PC-3 (cell line): ENCODE measurements at regions of chr1 and their contacts with region 1.

Region 1: DNA sequence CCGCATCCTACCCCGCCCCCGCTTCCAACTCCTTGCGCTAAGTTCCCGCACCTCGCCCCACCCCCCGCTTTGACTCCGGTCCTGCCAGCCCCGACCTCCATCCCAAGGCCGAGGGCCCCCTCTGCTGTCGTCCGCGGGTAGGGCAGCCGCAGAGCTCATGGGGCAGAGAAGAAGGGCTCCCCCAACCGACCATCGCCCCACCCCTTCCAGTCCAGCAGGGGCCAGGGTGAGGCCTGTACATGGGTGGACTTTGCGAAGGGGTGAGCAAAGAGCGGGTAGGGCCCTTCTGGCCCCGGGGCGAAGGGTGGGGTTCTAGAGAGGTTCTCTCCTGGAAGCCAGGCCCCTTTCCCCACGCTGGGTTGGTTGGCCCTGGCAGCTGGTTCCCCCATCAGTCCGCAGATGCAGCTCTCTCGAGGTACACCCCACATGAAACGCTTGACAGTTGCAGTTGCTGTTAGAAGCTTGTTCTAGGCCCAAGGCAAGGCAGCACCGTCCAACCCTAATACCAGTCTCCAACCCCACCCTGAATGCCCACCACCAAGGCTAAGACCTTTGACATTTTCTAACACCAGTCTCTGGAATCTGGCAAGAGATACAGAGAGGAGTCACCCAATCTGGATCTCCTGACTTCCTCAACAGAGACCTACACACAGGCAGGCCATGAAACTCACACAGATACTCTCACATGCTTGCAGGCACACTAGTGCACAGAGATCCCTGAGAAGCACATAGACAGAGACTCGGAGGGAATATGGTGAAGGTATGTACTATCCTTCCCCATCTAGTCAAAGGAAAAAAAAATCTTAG is 25.3 kb upstream of the ADGRB2 start:
- DNase-seq: peak; percentile 91
- ATAC-seq: peak; percentile 81
- H3K4me3 ChIP-seq: peak overlapping the region; percentile 76
- H3K27ac ChIP-seq: no peak overlapping the region
- H3K4me1 ChIP-seq: no peaks in the 10 kb centered on the region
- H3K27me3 ChIP-seq: no peaks in the 10 kb centered on the region
- CTCF ChIP-seq: peak; percentile 89

Region 2: DNA sequence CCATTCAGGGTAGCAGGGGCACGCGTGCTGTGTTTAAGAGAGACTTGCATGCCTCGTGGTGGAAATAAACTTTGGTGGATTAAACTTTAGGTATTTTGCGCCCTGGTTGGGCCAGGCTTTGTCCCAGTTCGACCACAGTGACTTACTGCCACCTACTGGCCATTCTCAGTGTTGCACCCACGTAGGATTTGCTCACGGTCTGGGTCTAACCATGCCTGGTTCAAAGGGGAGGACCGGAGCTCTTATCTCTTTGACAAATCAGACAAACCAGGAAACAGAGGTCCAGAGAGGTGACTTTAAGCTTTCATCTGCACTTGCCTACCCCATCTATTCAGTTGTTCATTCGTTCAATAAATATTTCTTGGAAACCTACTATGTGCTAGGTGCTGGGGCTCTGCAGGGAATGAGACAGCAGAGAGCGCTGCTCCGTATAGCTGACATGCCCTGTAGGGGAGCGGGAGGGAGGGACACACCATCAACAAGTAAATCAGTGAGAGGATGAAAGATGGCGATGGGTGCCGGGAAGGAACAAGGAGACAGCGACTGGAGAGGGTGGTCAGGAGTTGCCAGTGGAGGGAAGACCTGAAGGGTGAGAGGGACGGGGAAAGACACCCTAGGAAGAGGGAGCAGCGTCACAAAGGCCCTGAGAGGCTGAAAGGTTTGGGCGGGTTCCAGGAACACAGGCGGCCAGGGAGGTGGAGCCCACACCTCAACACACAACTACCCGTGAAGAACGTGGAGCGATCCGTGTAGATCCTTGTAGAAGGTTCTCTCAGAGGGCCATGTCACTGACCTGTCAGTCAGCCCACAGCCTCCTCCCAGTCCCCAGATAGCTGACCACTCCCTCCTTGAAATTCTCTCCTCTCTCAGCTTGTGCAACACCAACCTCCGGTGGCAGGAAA is 240.3 kb before region 1 on chr1:
- CTCF ChIA-PET with region 1: interaction called, 4 read pairs
- POLR2A ChIA-PET with region 1: interaction called, 12 read pairs
- intact Hi-C with region 1: no loop called
- DNase-seq: peak; percentile 97
- ATAC-seq: peak; percentile 86
- H3K4me3 ChIP-seq: peak overlapping the region; percentile 55
- H3K27ac ChIP-seq: peak overlapping the region; percentile 74
- H3K4me1 ChIP-seq: peaks cover 24% of the 10 kb centered on the region
- H3K27me3 ChIP-seq: no peaks in the 10 kb centered on the region
- CTCF ChIP-seq: peak; percentile 96

Region 3: GRCh38 chr1:31644560-31645273 is 144.7 kb before region 1 on chr1 and contains the start of gene PEF1:
- CTCF ChIA-PET with region 1: interaction called, 3 read pairs
- POLR2A ChIA-PET with region 1: interaction called, 21 read pairs
- intact Hi-C with region 1: no loop called
- DNase-seq: peak; percentile 98
- ATAC-seq: peak; percentile 88
- H3K4me3 ChIP-seq: peak within 1 kb of the TSS; percentile 76
- H3K27ac ChIP-seq: peak within 1 kb of the TSS; percentile 83
- H3K4me1 ChIP-seq: peaks cover 12% of the 10 kb centered on the region
- H3K27me3 ChIP-seq: no peaks in the 10 kb centered on the region
- CTCF ChIP-seq: no peak
- total RNA-seq, gene PEF1: 88.4 and 91.6 TPM in 2 replicates

Region 4: GRCh38 chr1:31669786-31670592 is 119.5 kb before region 1 on chr1:
- CTCF ChIA-PET with region 1: interaction called, 15 read pairs
- POLR2A ChIA-PET with region 1: no interaction called
- intact Hi-C with region 1: no loop called
- DNase-seq: peak; percentile 77
- ATAC-seq: peak; percentile 70
- H3K4me3 ChIP-seq: peak overlapping the region; percentile 60
- H3K27ac ChIP-seq: peak overlapping the region; percentile 43
- H3K4me1 ChIP-seq: peaks cover 28% of the 10 kb centered on the region
- H3K27me3 ChIP-seq: no peaks in the 10 kb centered on the region
- CTCF ChIP-seq: peak; percentile 60

Region 5: DNA sequence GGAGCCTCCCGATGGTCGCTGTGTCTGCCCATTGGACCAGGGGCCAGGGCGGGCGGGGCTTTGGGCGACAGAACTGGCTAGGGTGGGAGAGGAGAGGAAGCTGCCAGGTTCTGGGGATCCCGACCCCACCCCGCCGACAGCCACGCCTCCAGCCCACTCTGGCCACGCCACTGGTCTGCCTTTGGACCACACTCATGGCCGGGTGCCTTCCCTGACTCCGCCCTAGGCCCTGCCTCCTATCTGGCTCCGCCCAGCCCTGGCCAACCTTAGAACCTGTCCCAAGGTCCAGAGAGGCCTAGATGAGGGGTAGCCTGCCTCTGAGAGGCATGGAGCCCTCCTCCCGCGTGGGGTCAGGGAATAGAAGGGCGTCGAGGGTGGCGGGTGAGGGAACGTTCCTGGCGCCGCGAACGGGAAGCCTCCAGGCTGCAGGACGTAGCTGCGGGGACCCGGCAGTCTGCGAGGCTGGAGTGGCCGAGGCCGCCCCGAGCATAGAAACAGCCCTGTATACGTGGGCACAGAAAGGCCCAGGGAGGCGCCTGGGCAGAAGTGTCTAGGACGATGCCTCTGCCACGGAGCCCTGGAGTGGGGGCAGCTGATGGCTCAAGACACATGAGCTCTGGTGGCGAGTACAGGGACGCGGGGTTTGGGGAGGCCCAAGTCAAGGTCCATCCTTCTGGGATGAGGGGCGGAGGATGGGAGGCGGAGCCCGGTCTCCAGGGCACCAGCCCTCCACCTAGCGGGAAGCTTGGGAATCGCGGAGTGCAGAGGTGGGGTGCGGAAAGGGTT is 74.2 kb before region 1 on chr1:
- CTCF ChIA-PET with region 1: interaction called, 10 read pairs
- POLR2A ChIA-PET with region 1: interaction called, 26 read pairs
- intact Hi-C with region 1: loop called (anchors 1 kb)
- DNase-seq: peak; percentile 87
- ATAC-seq: peak; percentile 93
- H3K4me3 ChIP-seq: peak overlapping the region; percentile 66
- H3K27ac ChIP-seq: peak overlapping the region; percentile 60
- H3K4me1 ChIP-seq: peaks cover 53% of the 10 kb centered on the region
- H3K27me3 ChIP-seq: no peaks in the 10 kb centered on the region
- CTCF ChIP-seq: peak; percentile 77

Region 6: GRCh38 chr1:31739346-31739745 is 50.1 kb before region 1 on chr1:
- CTCF ChIA-PET with region 1: no interaction called
- POLR2A ChIA-PET with region 1: no interaction called
- intact Hi-C with region 1: no loop called
- DNase-seq: no peak
- ATAC-seq: no peak
- H3K4me3 ChIP-seq: no peak overlapping the region
- H3K27ac ChIP-seq: no peak overlapping the region
- H3K4me1 ChIP-seq: no peaks in the 10 kb centered on the region
- H3K27me3 ChIP-seq: no peaks in the 10 kb centered on the region
- CTCF ChIP-seq: no peak

Region 7: DNA sequence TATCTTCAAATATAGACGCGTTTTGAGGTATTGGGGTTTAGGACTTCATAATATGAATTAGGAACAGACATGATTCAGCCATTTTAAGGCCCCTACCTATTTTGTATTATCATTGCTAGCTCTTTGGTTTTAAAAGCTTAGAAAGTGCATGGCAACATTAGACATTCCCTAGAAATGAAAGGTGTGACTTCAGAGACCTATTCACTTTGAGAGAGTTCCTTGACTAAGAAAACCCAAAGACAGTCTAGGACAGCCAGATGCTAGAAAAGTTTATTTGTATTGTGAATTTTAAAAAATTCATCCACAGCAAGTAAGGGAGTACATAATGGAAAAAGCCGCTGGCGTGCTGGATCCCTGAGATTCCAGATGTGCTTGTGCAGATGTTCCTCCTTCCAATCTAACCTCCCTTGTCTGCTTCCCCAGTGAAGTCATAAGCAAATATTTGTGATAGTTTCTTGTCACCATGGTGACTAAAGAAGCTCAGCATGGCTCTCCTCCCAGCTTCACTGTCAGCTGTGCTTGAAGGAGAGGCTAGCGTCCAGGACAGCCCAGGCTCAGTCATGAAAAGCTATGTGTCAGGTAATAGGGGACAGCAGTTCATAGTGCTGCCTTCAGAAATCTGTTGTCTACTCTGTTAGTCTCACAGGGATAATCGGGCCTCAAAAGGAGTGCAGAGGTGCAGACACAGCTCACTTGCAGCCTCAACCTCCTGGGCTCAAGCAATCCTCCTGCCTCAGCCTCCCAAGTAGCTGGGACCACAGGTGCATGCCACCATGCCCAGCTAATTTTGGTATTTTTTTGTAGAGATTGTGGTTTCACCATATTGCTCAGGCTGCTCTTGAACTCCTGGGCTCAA is 353.2 kb after region 1 on chr1:
- CTCF ChIA-PET with region 1: no interaction called
- POLR2A ChIA-PET with region 1: interaction called, 10 read pairs
- intact Hi-C with region 1: no loop called
- DNase-seq: peak; percentile 82
- ATAC-seq: peak; percentile 83
- H3K4me3 ChIP-seq: no peak overlapping the region
- H3K27ac ChIP-seq: peak overlapping the region; percentile 34
- H3K4me1 ChIP-seq: peaks cover 35% of the 10 kb centered on the region
- H3K27me3 ChIP-seq: no peaks in the 10 kb centered on the region
- CTCF ChIP-seq: no peak